Activated CD4-positive, alpha-beta T cell treated with anti-CD3 and anti-CD28 coated beads, Interleukin-2, amount 10 ng/mL, durations not matched to agents 24 days and 14 days (primary cell): ENCODE measurements at regions of chr17 and their contacts with region 1.

Region 1: GRCh38 chr17:17041571-17042380 is 481 bp upstream of the MPRIP start:
- DNase-seq: peak; percentile 99
- H3K4me3 Mint-ChIP-seq: peak overlapping the region; percentile 80
- H3K27ac Mint-ChIP-seq: no peak overlapping the region
- H3K4me1 Mint-ChIP-seq: peaks cover 36% of the 10 kb centered on the region
- H3K27me3 Mint-ChIP-seq: no peaks in the 10 kb centered on the region

Region 2: DNA sequence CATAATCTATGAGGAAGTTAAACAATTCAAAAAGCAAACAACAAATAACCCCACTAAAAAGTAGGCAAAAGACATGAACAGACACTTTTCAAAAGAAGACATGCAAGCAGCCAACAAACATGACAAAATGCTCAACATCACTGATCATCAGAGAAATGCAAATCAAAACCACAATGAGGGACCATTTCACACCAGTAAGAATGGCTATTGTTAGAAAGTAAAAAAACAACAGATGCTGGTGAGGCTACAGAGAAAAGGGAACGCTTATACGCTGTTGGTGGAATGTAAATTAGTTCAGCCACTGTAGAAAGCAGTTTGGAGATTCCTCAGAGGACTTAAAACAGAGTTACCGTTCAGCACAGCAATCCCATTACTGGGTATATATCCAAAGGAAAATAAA is 94.3 kb before region 1 on chr17:
- intact Hi-C with region 1: no loop called
- DNase-seq: no peak
- H3K4me3 Mint-ChIP-seq: no peak overlapping the region
- H3K27ac Mint-ChIP-seq: no peak overlapping the region
- H3K4me1 Mint-ChIP-seq: no peaks in the 10 kb centered on the region
- H3K27me3 Mint-ChIP-seq: peaks cover 5% of the 10 kb centered on the region

Region 3: DNA sequence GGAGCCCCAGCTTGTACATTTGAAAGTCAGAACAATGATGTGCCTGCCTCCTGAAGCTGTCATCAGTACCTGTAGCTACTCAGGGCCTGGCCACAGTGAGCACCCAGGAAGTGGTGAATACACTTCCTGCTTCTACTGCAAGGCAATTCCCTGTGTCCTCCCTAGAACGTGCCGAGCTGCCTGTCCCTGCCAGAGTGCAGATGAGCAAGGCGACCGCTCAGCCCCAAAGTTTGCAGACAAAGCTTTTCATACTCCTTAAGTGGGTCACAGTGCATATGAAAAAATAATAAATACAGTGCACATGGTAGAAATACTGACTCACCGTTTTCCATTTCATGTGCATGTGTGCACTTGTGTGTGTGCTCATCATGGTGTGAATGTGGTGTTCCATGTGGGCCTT is 77.8 kb after region 1 on chr17:
- intact Hi-C with region 1: loop called (anchors 5 kb)
- DNase-seq: peak; percentile 86
- H3K4me3 Mint-ChIP-seq: peak overlapping the region; percentile 34
- H3K27ac Mint-ChIP-seq: peak overlapping the region; percentile 93
- H3K4me1 Mint-ChIP-seq: peaks cover 68% of the 10 kb centered on the region
- H3K27me3 Mint-ChIP-seq: no peaks in the 10 kb centered on the region

Region 4: DNA sequence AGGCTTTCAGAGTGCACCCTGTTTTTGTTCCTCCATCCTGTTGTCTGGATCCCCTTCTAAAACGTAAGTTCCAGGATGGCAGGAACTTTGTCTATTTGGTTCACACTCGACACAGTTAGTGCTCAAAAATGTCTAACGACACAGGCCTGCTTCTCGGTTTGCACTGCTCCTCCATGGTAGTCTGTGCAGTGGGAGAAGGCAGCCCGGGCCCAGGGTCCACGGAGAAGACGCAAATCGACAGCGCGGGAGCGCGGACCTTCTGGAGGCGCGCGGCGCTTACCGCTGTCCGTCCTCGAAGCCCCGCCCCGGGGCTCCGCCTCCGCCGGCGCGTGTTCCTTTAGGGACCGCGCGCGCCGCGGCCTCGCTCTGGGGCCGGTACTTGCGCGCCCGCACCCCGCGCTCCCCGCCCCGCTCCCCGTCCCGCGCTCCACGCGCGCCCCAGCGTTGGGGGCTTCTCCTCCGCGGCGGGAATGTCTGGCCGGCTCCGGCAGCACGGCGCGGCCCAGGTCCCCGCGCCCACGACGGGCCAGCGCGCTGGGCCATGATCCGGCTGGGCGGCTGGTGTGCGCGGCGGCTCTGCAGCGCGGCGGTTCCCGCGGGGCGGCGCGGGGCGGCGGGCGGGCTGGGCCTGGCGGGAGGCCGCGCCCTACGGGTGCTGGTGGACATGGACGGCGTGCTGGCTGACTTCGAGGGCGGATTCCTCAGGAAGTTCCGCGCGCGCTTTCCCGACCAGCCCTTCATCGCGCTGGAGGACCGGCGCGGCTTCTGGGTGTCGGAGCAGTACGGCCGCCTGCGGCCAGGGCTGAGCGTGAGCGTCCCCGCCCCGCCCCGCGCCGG is 261.5 kb after region 1 on chr17 and contains the start of gene NT5M:
- intact Hi-C with region 1: loop called (anchors 2 kb)
- DNase-seq: peak; percentile 94
- H3K4me3 Mint-ChIP-seq: peak within 1 kb of the TSS; percentile 89
- H3K27ac Mint-ChIP-seq: peak within 1 kb of the TSS; percentile 92
- H3K4me1 Mint-ChIP-seq: peaks cover 30% of the 10 kb centered on the region
- H3K27me3 Mint-ChIP-seq: no peaks in the 10 kb centered on the region
- total RNA-seq, gene NT5M: 7.1 and 8.1 TPM in 2 replicates